ENCODE measurements at regions of chr17 and their contacts with region 1.

Region 1: DNA sequence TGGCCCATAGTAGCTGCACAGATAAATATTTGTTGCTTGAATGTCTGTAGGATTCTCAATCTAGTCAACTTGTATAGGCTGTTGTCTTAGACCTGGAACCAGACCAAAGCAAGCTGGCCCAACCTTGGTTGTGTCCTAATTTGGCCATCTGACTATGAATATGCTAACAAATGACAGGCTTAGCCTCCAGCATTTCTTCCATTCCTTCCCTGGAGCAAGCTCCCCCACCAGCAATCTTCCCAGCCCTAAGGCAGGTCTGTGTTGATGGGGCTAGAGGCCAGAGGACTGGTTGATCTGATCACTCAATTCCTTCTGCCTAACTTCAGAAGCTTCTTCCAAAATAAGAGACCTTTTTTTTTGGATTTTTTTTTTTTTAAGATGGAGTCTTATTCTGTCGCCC is 9.4 kb upstream of the PHOSPHO1 start:
- DNase-seq: no peak
- ATAC-seq: no peak
- H3K4me3 ChIP-seq: no peak overlapping the region
- H3K27ac ChIP-seq: no peak overlapping the region
- H3K4me1 ChIP-seq: no peaks in the 10 kb centered on the region
- H3K27me3 ChIP-seq: peaks cover 27% of the 10 kb centered on the region
- CTCF ChIP-seq: no peak
- POLR2A ChIP-seq: no peak
- RAD21 ChIP-seq: no peak

Region 2: GRCh38 chr17:48892940-48893645 is 346.9 kb before region 1 on chr17:
- CTCF ChIA-PET with region 1: no interaction called
- POLR2A ChIA-PET with region 1: interaction called, 10 read pairs
- dilution Hi-C with region 1: no loop called
- in situ Hi-C with region 1: no loop called
- intact Hi-C with region 1: no loop called
- DNase-seq: no peak
- ATAC-seq: no peak; the same call in 1 of the 2 replicates
- H3K4me3 ChIP-seq: peak overlapping the region; percentile 59
- H3K27ac ChIP-seq: peak overlapping the region; percentile 34
- H3K4me1 ChIP-seq: peaks cover 1% of the 10 kb centered on the region; the same call in 1 of the 2 replicates
- H3K27me3 ChIP-seq: no peaks in the 10 kb centered on the region
- CTCF ChIP-seq: no peak
- POLR2A ChIP-seq: no peak
- RAD21 ChIP-seq: no peak